ENCODE measurements at regions of chr11 and their contacts with region 1.

Region 1: DNA sequence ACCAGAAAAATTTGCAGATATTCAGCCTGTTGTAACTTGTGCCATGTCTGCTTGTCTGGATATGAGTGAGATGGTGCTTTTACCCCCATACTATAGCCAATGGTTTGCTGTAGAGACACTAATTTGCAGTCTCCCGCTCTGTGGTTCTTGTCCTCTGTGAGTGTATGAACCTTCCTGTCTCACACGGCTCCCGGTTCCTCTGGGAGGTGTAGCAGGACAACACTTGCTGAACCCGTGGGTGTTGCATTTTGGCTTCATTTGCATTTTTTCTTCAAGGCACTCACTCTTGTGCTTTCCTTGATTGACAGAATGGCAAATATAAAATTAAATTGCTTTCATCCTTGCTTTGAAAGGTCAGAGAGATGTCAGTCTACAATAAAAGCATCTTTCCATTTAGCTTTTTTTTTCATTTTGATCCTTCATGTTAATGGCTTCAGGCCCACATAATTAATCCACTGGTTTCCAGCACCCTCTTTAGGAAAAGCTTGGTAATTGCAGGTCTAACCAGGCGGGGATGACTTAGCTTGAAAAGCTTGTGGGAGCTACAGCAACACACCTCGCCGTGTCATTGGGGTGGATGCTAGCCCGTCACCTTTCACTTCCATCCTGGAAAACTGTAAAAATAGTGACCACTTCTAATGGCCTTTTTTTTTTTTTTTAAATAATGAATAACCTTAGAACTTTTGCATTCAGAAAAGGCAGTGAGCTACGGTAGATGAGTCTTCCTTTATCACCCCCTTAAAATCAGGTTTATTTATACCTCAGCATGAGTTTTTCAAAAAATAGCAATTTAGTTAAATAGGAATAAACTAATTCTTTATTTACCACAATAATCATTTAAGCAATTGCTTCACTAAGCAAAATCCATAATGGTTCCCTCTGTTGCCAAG is 27.4 kb upstream of the ST14 start:
- DNase-seq: peak in 34 of 35 experiments; percentile 5 to 78 (median 30)
- ATAC-seq: peak; percentile 68 to 80 (median 73)
- H3K4me3 ChIP-seq: no peak overlapping the region
- H3K4me3 Mint-ChIP-seq: no peak overlapping the region
- H3K27ac ChIP-seq: no peak overlapping the region
- H3K27ac Mint-ChIP-seq: no peak overlapping the region
- H3K4me1 ChIP-seq: no peaks in the 10 kb centered on the region
- H3K4me1 Mint-ChIP-seq: no peaks in the 10 kb centered on the region
- H3K27me3 ChIP-seq: no peaks in the 10 kb centered on the region
- H3K27me3 Mint-ChIP-seq: no peaks in the 10 kb centered on the region

Region 2: DNA sequence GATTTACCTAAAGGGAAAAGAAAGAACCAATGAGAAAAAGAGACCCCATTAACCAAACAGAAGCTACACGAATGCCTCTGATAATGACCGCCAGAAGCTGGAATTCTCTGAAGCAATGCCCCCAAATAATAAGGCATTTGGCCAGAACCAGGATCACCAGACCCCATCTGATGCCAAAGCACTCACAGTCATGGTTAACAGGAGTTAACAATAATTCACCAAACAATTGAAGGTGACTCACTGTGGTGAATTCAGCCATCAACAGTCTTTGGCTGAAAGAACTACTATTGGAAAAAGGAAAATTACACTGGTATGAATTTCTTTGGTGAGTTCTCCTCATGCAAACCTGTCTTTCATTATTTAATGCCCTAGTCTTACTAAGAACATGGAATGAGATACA is 215.0 kb before region 1 on chr11:
- CTCF ChIA-PET with region 1: interaction called, 14 to 118 read pairs
- POLR2A ChIA-PET with region 1: interaction called in 1 of 2 experiments, 3 read pairs
- DNase-seq: no peak
- ATAC-seq: no peak
- H3K4me3 ChIP-seq: no peak overlapping the region
- H3K4me3 Mint-ChIP-seq: no peak overlapping the region
- H3K27ac ChIP-seq: no peak overlapping the region
- H3K27ac Mint-ChIP-seq: no peak overlapping the region
- H3K4me1 ChIP-seq: no peaks in the 10 kb centered on the region
- H3K4me1 Mint-ChIP-seq: peaks cover 0 to 3% (median 0%) of the 10 kb centered on the region in 3 donors
- H3K27me3 ChIP-seq: no peaks in the 10 kb centered on the region
- H3K27me3 Mint-ChIP-seq: no peaks in the 10 kb centered on the region

Region 3: GRCh38 chr11:129992161-129992944 is 139.9 kb before region 1 on chr11:
- CTCF ChIA-PET with region 1: interaction called, 30 to 48 read pairs
- POLR2A ChIA-PET with region 1: interaction called in 1 of 2 experiments, 3 read pairs
- DNase-seq: peak in 33 of 35 experiments; percentile 4 to 65 (median 32)
- ATAC-seq: peak; percentile 67 to 87 (median 73)
- H3K4me3 ChIP-seq: no peak overlapping the region
- H3K4me3 Mint-ChIP-seq: no peak overlapping the region
- H3K27ac ChIP-seq: no peak overlapping the region
- H3K27ac Mint-ChIP-seq: no peak overlapping the region
- H3K4me1 ChIP-seq: no peaks in the 10 kb centered on the region
- H3K4me1 Mint-ChIP-seq: peaks cover 6 to 18% (median 15%) of the 10 kb centered on the region in 3 donors
- H3K27me3 ChIP-seq: no peaks in the 10 kb centered on the region
- H3K27me3 Mint-ChIP-seq: no peaks in the 10 kb centered on the region

Region 4: DNA sequence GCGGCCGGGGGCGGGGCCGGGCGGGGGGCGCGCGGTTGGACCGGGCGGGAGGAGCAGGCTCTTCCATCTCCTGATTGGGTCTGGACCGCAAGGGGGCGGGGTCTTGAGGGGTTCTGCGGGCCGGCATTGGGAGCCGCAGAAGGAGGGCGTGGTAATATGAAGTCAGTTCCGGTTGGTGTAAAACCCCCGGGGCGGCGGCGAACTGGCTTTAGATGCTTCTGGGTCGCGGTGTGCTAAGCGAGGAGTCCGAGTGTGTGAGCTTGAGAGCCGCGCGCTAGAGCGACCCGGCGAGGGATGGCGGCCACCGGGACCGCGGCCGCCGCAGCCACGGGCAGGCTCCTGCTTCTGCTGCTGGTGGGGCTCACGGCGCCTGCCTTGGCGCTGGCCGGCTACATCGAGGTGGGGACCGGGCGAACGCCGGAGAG is 62.5 kb before region 1 on chr11 and contains the start of gene APLP2:
- CTCF ChIA-PET with region 1: interaction called in 1 of 2 experiments, 12 read pairs
- POLR2A ChIA-PET with region 1: no interaction called
- DNase-seq: peak; percentile 87 to 99 (median 97)
- ATAC-seq: peak; percentile 89 to 93 (median 92)
- H3K4me3 ChIP-seq: peak within 1 kb of the TSS; percentile 84 to 86
- H3K4me3 Mint-ChIP-seq: peak within 1 kb of the TSS; percentile 92 to 97 (median 95)
- H3K27ac ChIP-seq: peak within 1 kb of the TSS; percentile 82
- H3K27ac Mint-ChIP-seq: peak within 1 kb of the TSS; percentile 94 to 96
- H3K4me1 ChIP-seq: peaks cover 2 to 14% of the 10 kb centered on the region in 2 experiments
- H3K4me1 Mint-ChIP-seq: peaks cover 21 to 33% (median 26%) of the 10 kb centered on the region in 3 donors
- H3K27me3 ChIP-seq: no peaks in the 10 kb centered on the region
- H3K27me3 Mint-ChIP-seq: no peaks in the 10 kb centered on the region
- total RNA-seq, gene APLP2: 36.4 to 61.9 (median 51.0) TPM

Region 5: DNA sequence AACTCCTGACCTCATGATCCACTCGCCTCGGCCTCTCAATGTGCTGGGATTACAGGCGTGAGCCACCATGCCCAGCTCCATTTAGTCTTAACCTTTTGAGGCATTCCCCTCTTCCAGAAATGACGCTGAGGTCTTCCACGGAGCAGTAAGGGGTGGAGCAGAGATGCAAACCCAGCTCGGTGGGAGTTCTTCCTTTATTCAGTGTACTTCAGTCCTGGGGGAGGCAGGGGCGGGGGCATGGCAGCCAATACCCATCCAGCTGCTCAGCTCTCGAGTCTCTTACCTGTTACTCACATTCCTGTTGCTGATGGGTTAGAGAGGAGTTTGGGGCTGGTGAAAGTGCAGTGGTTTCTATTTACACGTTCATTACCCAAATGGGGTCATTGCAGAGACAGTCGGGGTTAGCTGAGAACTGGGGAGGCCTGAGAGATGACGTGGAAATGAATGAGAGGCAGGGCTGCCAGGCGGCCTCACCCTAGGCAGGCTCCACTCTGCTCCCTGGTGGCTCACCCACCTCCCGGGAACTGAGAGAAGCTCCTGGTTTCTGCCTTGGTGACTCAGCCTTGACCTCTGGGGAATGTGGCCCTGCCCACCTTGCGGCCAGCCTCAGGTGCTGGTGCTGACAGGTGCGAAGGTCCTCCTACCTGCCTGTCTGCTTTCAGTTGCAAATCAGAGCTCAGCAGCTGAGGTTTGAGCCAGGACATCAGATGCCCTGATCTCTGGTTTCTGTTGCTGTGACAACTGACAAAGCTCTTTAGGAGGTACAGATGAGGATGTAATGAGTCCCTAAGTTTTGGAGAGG is 14.0 kb after region 1 on chr11:
- CTCF ChIA-PET with region 1: interaction called, 3 to 16 read pairs
- POLR2A ChIA-PET with region 1: no interaction called
- DNase-seq: no peak
- ATAC-seq: peak; percentile 24 to 43 (median 36)
- H3K4me3 ChIP-seq: no peak overlapping the region
- H3K4me3 Mint-ChIP-seq: peak overlapping the region in 1 of 3 donors; percentile 14
- H3K27ac ChIP-seq: peak overlapping the region; percentile 49
- H3K27ac Mint-ChIP-seq: peak overlapping the region; percentile 45 to 55
- H3K4me1 ChIP-seq: peaks cover 0 to 15% of the 10 kb centered on the region in 2 experiments
- H3K4me1 Mint-ChIP-seq: peaks cover 13 to 26% (median 15%) of the 10 kb centered on the region in 3 donors
- H3K27me3 ChIP-seq: no peaks in the 10 kb centered on the region
- H3K27me3 Mint-ChIP-seq: peaks cover 0 to 1% of the 10 kb centered on the region in 2 donors